Dorsolateral prefrontal cortex (tissue), 120 donors: ENCODE measurements at regions of chrX and their contacts with region 1.

Region 1: GRCh38 chrX:78555401-78555980 is 103.6 kb downstream of the RTL3 start:
- DNase-seq: no peak
- H3K4me3 ChIP-seq: no peak overlapping the region
- H3K27ac ChIP-seq: no peak overlapping the region
- H3K27me3 ChIP-seq: peaks cover 0 to 16% (median 0%) of the 10 kb centered on the region in 45 donors
- CTCF ChIP-seq: peak; percentile 17 to 71 (median 46)

Region 2: GRCh38 chrX:78384486-78384885 is 171.0 kb before region 1 on chrX:
- intact Hi-C with region 1: no loop called
- DNase-seq: no peak
- H3K4me3 ChIP-seq: no peak overlapping the region
- H3K27ac ChIP-seq: no peak overlapping the region
- H3K27me3 ChIP-seq: peaks cover 0 to 55% (median 11%) of the 10 kb centered on the region in 45 donors
- CTCF ChIP-seq: no peak

Region 3: GRCh38 chrX:78595901-78596502 is 40.5 kb after region 1 on chrX:
- intact Hi-C with region 1: no loop called
- DNase-seq: no peak
- H3K4me3 ChIP-seq: no peak overlapping the region
- H3K27ac ChIP-seq: no peak overlapping the region
- H3K27me3 ChIP-seq: peaks cover 0 to 61% (median 14%) of the 10 kb centered on the region in 45 donors
- CTCF ChIP-seq: peak in 1 of 56 donors; percentile 8

Region 4: GRCh38 chrX:78673256-78673655 is 117.8 kb after region 1 on chrX:
- intact Hi-C with region 1: no loop called
- DNase-seq: no peak
- H3K4me3 ChIP-seq: no peak overlapping the region
- H3K27ac ChIP-seq: no peak overlapping the region
- H3K27me3 ChIP-seq: peaks cover 0 to 43% (median 15%) of the 10 kb centered on the region in 45 donors
- CTCF ChIP-seq: no peak

Region 5: DNA sequence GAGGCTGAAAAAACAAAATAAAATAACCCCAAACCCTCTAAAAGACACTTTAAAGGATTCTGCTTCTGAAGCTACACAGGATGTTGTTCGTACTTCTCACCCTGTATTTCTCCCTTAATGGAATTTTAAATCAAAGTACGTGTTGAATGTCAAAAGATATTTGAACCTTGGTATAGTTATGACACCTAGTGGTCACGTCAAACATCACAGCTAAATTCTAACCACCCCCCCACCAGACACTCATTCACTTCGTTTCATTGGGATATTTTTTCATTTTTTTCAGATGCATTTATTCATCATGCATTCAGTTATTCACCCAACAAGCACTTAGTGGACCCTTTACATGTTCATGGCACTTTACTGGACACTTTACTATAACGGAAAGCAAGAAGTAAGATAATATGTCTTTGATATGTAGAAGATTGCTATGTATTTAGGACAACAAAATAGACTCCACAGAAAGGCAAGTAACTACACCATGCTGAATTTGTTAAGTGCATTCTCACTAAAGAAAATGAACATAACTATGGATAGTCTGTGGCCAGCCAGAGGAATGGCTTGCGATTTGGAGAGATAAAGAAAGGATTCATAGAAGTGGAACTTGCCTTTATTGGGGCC is 526.5 kb after region 1 on chrX:
- intact Hi-C with region 1: loop called in 1 of 2 experiments (anchors 10 kb)
- DNase-seq: no peak
- H3K4me3 ChIP-seq: peak overlapping the region in 1 of 59 donors; percentile 15
- H3K27ac ChIP-seq: no peak overlapping the region
- H3K27me3 ChIP-seq: peaks cover 0 to 44% (median 5%) of the 10 kb centered on the region in 45 donors
- CTCF ChIP-seq: peak; percentile 29 to 80 (median 67)

Region 6: DNA sequence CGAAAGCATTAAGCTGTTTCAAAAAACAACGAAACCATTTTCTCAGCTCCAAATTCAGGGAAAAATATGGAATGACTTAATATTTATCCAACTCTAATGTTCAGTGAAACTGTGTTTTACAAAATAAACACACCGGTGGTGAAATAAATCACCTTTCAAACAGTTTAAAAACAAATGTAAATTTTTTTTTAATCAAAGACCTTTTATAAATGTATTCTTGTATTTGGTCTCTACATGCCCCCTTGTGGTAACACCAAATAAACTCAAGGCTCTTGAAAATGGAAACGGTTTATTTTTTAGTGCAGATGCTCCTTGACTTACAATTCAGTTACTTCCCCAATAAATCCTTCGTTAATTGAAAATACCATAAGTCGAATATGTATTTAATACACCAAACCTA is 857.5 kb after region 1 on chrX:
- intact Hi-C with region 1: loop called in 1 of 2 experiments (anchors 10 kb)
- DNase-seq: no peak
- H3K4me3 ChIP-seq: peak overlapping the region in 51 of 59 donors; percentile 5 to 62 (median 38)
- H3K27ac ChIP-seq: peak overlapping the region in 1 of 59 donors; percentile 24
- H3K27me3 ChIP-seq: peaks cover 0 to 28% (median 0%) of the 10 kb centered on the region in 45 donors
- CTCF ChIP-seq: peak; percentile 8 to 72 (median 57)